HEK293 (cell line): ENCODE measurements at regions of chr10 and their contacts with region 1.

Region 1: GRCh38 chr10:70227548-70228320 is 5.5 kb downstream of the PPA1 start:
- H3K4me3 ChIP-seq: no peak overlapping the region
- H3K27ac ChIP-seq: no peak overlapping the region
- H3K4me1 ChIP-seq: no peaks in the 10 kb centered on the region
- CTCF ChIP-seq: no peak

Region 2: DNA sequence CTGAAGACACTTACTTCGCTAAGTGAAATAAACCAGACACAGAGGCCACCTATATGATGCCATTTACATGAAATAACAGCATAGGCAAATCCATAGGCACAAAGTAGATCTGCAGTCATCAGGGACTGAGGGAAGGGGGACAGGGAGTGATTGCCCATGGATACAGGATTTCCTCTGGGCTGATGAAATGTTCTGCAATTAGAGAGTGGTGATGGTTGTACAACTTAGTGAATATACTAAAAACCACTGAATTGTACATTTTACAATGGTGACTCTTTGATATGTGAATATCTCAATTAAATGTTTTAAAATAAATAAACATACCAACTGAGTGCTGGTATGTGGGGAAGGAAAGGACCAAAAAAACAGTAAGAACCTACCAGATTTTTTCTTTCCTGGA is 14.9 kb before region 1 on chr10:
- CTCF ChIA-PET with region 1: no interaction called
- POLR2A ChIA-PET with region 1: no interaction called
- H3K4me3 ChIP-seq: no peak overlapping the region
- H3K27ac ChIP-seq: no peak overlapping the region
- H3K4me1 ChIP-seq: no peaks in the 10 kb centered on the region
- CTCF ChIP-seq: no peak

Region 3: GRCh38 chr10:70348228-70348850 is 120.6 kb after region 1 on chr10:
- CTCF ChIA-PET with region 1: interaction called, 76 read pairs
- POLR2A ChIA-PET with region 1: interaction called, 7 read pairs
- H3K4me3 ChIP-seq: no peak overlapping the region
- H3K27ac ChIP-seq: no peak overlapping the region
- H3K4me1 ChIP-seq: no peaks in the 10 kb centered on the region
- CTCF ChIP-seq: 0 out of 2 replicates have a peak, but pooled peaks have one; percentile 29